HAP-1 (cell line): ENCODE measurements at regions of chr17 and their contacts with region 1.

Region 1: DNA sequence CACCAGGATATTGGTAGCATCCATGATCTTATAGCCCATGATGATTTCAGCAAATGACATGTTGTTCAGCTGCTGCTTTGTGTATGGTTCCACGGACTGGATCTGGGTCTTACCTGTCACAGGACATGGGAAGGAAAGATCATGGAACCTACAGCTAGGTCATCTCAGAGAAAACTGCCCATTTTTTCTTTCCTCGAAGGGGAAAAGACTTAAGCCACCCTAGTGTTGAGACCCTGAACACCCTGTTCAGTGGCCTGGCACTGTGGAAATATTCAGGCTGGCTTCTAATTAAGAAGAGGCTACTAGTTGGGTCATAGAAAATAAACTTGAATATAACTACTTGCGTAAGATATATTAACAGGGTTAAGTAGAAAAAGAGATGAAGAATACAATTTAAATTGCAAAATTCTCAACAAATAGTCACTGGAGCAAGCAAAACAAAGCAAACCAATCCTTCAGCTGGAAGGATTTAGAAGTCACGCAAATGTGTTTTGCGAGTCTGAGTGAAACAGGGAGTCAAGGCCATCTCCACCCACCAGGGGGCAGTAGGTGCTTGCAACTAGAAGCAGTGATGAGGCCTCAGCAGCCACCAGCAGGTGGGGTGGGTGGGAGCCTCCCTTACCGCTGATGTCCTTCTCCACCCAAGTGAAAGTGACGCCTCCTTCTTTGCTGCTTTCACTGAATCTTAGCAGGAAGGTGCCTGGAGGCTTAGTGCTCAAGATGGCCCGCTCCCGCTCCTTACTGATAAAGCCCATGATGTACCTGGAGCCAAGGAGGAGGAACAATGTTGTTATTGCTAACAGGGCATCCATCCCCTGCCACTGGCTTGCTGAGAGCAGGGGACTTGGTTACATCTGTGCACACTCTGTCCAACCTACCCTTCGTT is 34.3 kb downstream of the STAT5A start:
- DNase-seq: peak; percentile 88 to 97
- H3K4me3 ChIP-seq: no peak overlapping the region
- H3K4me1 ChIP-seq: peaks cover 3% of the 10 kb centered on the region
- H3K27me3 ChIP-seq: no peaks in the 10 kb centered on the region

Region 2: DNA sequence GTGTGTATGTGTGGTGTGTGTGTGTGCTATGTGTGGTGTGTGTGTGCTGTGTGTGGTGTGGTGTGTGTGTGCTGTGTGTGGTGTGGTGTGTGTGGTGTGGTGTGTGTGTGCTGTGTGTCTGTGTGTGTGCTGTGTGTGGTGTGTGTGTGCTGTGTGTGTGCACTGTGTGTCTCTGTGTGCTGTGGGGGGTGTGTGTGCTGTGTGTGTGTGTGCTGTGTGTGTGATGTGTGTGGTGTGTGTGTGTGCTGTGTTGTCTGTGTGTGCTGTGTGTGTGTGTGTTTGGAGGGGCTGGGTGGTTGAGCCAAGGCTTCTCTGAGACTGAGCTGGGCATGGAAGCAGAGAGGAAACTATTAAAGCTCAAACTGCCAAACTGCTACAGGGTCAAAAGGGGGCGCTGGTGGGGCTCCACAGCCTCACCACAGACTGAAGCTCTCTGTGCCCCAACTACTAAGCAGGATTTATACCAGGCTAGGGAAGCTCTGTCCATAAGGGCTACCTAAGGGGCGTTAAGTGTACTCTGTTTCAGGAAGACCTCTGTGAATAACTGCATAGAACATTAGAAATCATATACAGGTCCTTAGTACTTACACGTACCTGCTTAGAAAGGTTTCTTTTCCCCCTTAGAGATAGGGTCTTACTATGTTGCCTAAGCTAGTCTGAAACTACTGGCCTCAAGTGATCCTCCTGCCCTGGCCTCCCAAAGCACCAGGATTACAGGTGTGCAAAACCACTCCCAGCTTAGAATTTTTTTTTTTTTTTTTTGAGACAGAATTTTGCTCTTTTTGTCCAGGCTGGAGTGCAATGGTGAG is 100.5 kb before region 1 on chr17:
- in situ Hi-C with region 1: no loop called
- DNase-seq: peak; percentile 17 to 54
- H3K4me3 ChIP-seq: no peak overlapping the region
- H3K4me1 ChIP-seq: no peaks in the 10 kb centered on the region
- H3K27me3 ChIP-seq: no peaks in the 10 kb centered on the region

Region 3: GRCh38 chr17:42405963-42406495 is 83.4 kb after region 1 on chr17:
- in situ Hi-C with region 1: loop called (anchors 5 kb)
- DNase-seq: peak; percentile 75 to 91
- H3K4me3 ChIP-seq: no peak overlapping the region
- H3K4me1 ChIP-seq: peaks cover 10% of the 10 kb centered on the region
- H3K27me3 ChIP-seq: no peaks in the 10 kb centered on the region

Region 4: DNA sequence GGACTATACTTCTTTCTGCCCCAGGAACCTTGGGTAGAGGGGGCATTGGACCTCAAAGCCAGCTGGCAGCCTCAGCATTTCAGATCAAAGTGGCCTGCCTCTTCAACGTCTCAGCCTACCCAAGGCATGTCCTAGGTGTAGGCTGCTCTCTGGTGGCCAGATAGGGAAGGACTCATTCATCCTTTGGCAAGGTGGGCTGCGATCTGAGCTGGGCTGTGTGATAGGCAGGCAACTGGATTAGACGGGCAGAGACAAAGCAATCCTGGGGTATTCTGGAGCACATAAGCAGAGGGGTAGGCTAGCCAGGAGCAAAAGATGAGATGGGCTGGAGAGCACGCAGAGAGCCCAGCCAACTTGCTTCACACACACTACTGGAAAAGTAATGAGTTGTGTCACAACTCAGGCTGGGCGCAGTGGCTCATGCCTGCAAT is 204.7 kb after region 1 on chr17:
- in situ Hi-C with region 1: loop called (anchors 10 kb)
- DNase-seq: peak; percentile 66 to 84
- H3K4me3 ChIP-seq: no peak overlapping the region
- H3K4me1 ChIP-seq: 0 out of 2 replicates have a peak, but pooled peaks cover 2% of the 10 kb centered on the region
- H3K27me3 ChIP-seq: no peaks in the 10 kb centered on the region